ENCODE measurements at regions of chr7 and their contacts with region 1.

Region 1: GRCh38 chr7:73683056-73683964 is at the starts of genes BUD23 and DNAJC30:
- DNase-seq: peak; percentile 86 to 98 (median 92)
- H3K4me3 ChIP-seq: peak within 1 kb of the TSS; percentile 89 to 98
- H3K4me3 Mint-ChIP-seq: peak within 1 kb of the TSS; percentile 94 to 99 (median 96)
- H3K27ac ChIP-seq: peak within 1 kb of the TSS; percentile 78
- H3K27ac Mint-ChIP-seq: peak within 1 kb of the TSS; percentile 94 to 97 (median 95)
- H3K4me1 ChIP-seq: peaks cover 28% of the 10 kb centered on the region
- H3K4me1 Mint-ChIP-seq: peaks cover 15 to 47% (median 30%) of the 10 kb centered on the region in 4 donors
- H3K27me3 ChIP-seq: no peaks in the 10 kb centered on the region
- H3K27me3 Mint-ChIP-seq: no peaks in the 10 kb centered on the region
- total RNA-seq, gene BUD23: 54.3 to 60.6 TPM
- total RNA-seq, gene DNAJC30: 16.3 to 16.5 TPM

Region 2: DNA sequence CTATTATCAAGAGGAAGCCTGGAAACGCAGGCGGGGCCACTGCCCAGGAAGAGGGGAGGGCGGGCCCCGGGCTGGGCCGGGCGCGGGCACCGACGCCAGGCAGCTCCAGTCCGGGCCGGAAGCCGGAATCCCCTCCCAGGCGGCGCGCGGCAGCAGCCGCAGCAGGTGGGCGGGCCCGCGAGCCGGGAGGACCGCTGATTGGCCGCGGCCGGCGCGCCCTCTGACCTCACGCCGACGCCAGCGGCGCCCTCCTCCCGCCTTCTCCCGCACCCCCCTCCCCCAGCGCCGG is 126.3 kb before region 1 on chr7:
- CTCF ChIA-PET with region 1: no interaction called
- POLR2A ChIA-PET with region 1: no interaction called
- intact Hi-C with region 1: loop called (anchors 1 kb)
- DNase-seq: peak; percentile 90 to 93 (median 92)
- H3K4me3 ChIP-seq: peak overlapping the region; percentile 67 to 99
- H3K4me3 Mint-ChIP-seq: peak overlapping the region; percentile 89 to 95 (median 92)
- H3K27ac ChIP-seq: peak overlapping the region; percentile 97
- H3K27ac Mint-ChIP-seq: peak overlapping the region; percentile 91 to 96 (median 95)
- H3K4me1 ChIP-seq: peaks cover 44% of the 10 kb centered on the region
- H3K4me1 Mint-ChIP-seq: peaks cover 21 to 41% (median 29%) of the 10 kb centered on the region in 4 donors
- H3K27me3 ChIP-seq: no peaks in the 10 kb centered on the region
- H3K27me3 Mint-ChIP-seq: no peaks in the 10 kb centered on the region

Region 3: DNA sequence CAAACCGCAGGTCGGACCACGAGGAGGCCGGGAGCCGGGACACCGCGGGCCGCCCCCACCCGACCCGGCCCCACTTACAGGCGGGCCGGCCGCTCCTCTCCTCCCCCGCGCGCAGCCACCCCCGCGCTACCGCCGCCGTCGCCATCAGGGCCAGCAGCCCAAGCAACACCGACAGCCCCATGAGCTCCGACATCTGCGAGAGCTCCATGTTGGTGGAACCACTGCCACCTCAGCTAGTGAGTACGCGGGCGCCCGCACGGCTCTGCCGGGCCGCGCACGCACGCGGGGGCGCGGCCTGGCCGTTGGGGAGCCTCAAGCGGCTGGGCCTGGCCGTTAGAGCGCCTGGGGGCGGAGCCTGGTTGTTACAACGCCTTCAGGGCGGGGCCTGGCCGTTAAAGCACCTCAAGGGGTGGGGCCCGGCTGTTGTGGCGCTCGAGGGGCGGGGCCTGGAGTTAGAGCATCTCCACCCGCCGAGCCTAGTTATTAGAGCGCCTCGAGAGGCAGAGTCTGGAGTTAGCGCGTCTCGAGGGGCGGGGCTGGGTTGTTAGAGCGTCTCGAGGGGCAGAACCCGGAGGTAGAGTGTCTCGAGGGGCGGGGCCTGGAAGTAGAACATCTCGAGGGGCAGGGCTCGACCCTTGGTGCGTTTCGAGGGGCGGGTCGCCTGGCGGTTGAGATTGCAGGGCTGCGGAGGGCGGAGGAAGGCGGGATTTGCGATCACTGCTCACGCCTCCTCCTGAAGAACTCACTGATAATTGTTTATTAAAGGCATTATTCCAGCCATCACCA is 104.8 kb before region 1 on chr7 and contains the start of gene TBL2:
- CTCF ChIA-PET with region 1: no interaction called
- POLR2A ChIA-PET with region 1: no interaction called
- intact Hi-C with region 1: loop called (anchors 1 kb)
- DNase-seq: peak; percentile 98 to 99 (median 98)
- H3K4me3 ChIP-seq: peak within 1 kb of the TSS; percentile 60 to 78
- H3K4me3 Mint-ChIP-seq: peak within 1 kb of the TSS; percentile 87 to 99 (median 96)
- H3K27ac ChIP-seq: peak within 1 kb of the TSS; percentile 82
- H3K27ac Mint-ChIP-seq: peak within 1 kb of the TSS; percentile 86 to 99 (median 98)
- H3K4me1 ChIP-seq: peaks cover 29% of the 10 kb centered on the region
- H3K4me1 Mint-ChIP-seq: peaks cover 13 to 37% (median 22%) of the 10 kb centered on the region in 4 donors
- H3K27me3 ChIP-seq: no peaks in the 10 kb centered on the region
- H3K27me3 Mint-ChIP-seq: no peaks in the 10 kb centered on the region
- total RNA-seq, gene TBL2: 45.4 to 47.5 TPM

Region 4: GRCh38 chr7:73667344-73668102 is 15.8 kb before region 1 on chr7 and contains the start of gene VPS37D:
- CTCF ChIA-PET with region 1: interaction called, 3 read pairs
- POLR2A ChIA-PET with region 1: interaction called, 4 read pairs
- intact Hi-C with region 1: loop called (anchors 1 kb)
- DNase-seq: peak; percentile 87 to 96 (median 91)
- H3K4me3 ChIP-seq: peak within 1 kb of the TSS in 1 of 2 donors; percentile 44
- H3K4me3 Mint-ChIP-seq: peak within 1 kb of the TSS; percentile 70 to 81 (median 76)
- H3K27ac ChIP-seq: no peak within 1 kb of the TSS
- H3K27ac Mint-ChIP-seq: peak within 1 kb of the TSS in 6 of 7 donors; percentile 48 to 70 (median 54)
- H3K4me1 ChIP-seq: peaks cover 10% of the 10 kb centered on the region
- H3K4me1 Mint-ChIP-seq: peaks cover 4 to 12% (median 7%) of the 10 kb centered on the region in 4 donors
- H3K27me3 ChIP-seq: peaks cover 13% of the 10 kb centered on the region
- H3K27me3 Mint-ChIP-seq: peaks cover 19 to 31% of the 10 kb centered on the region in 2 donors
- total RNA-seq, gene VPS37D: not detected

Region 5: GRCh38 chr7:73718905-73719805 is 35.8 kb after region 1 on chr7 and contains the start of gene STX1A:
- CTCF ChIA-PET with region 1: no interaction called
- POLR2A ChIA-PET with region 1: interaction called, 3 read pairs
- intact Hi-C with region 1: loop called (anchors 1 kb)
- DNase-seq: peak; percentile 65 to 78 (median 71)
- H3K4me3 ChIP-seq: peak within 1 kb of the TSS; percentile 65 to 76
- H3K4me3 Mint-ChIP-seq: peak within 1 kb of the TSS; percentile 84 to 92 (median 91)
- H3K27ac ChIP-seq: peak within 1 kb of the TSS; percentile 46
- H3K27ac Mint-ChIP-seq: peak within 1 kb of the TSS in 5 of 7 donors; percentile 68 to 90 (median 72)
- H3K4me1 ChIP-seq: peaks cover 34% of the 10 kb centered on the region
- H3K4me1 Mint-ChIP-seq: peaks cover 13 to 29% (median 20%) of the 10 kb centered on the region in 4 donors
- H3K27me3 ChIP-seq: no peaks in the 10 kb centered on the region
- H3K27me3 Mint-ChIP-seq: no peaks in the 10 kb centered on the region
- total RNA-seq, gene STX1A: 7.5 to 8.3 TPM